ENCODE measurements at regions of chr2 and their contacts with region 1.

Region 1: GRCh38 chr2:42086500-42086953 is 38.7 kb downstream of the PKDCC start:
- DNase-seq: peak; percentile 83

Region 2: GRCh38 chr2:41475959-41476358 is 610.6 kb before region 1 on chr2:
- in situ Hi-C with region 1: no loop called
- DNase-seq: peak; percentile 11

Region 3: DNA sequence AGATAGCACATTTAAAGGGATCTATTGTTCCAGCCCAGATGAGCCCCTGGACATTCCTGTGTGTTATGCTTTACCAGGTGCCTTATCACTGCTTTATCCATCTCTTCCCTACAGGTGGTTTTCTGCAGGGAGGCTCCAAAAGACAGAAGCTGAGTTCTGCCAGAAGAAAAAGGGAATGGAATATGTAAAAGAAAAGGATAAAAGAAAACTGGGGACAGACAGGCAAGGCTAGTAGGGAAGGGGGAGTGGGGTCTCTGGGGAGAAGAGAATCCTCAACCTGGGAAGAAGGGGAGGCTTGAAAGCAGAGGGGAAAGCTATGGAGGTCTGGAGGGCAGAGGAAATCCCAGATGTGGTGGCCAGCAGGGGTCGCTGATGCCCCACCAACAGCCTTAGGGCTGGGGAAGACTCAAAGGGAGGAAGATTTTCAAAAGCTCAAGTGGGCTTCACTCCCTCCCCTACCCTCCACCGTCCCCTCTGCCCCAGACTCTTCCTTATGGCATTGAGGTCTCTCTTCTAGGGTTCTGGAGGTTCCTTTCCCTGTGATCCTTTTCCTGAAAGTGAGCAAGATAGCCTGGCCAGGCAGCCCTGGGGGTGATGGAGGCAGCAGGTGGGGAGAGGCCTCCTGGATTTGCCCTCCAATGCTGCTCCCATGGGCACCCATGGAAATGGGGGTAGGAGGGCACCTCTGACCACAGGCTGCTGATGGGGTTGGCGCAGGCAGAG is 216.8 kb before region 1 on chr2:
- in situ Hi-C with region 1: loop called (anchors 10 kb)
- DNase-seq: peak; percentile 79

Region 4: GRCh38 chr2:42314892-42315467 is 228.5 kb after region 1 on chr2:
- in situ Hi-C with region 1: no loop called
- DNase-seq: peak; percentile 12

Region 5: GRCh38 chr2:42328148-42328833 is 241.8 kb after region 1 on chr2:
- in situ Hi-C with region 1: loop called (anchors 25 kb)
- DNase-seq: peak; percentile 51

Measured in KBM-7 (cell line).